ENCODE measurements at regions of chr5 and their contacts with region 1.

Region 1: GRCh38 chr5:157858527-157859226 is at the start of gene CLINT1:
- DNase-seq: peak; percentile 98
- H3K4me3 ChIP-seq: peak within 1 kb of the TSS; percentile 72 to 98 (median 92)
- H3K27ac ChIP-seq: peak within 1 kb of the TSS; percentile 81 to 92 (median 90)
- H3K4me1 ChIP-seq: peaks cover 35 to 52% (median 45%) of the 10 kb centered on the region in 4 donors
- H3K27me3 ChIP-seq: no peaks in the 10 kb centered on the region
- CTCF ChIP-seq: peak in 1 of 3 experiments; percentile 12
- EP300 ChIP-seq: no peak
- POLR2A ChIP-seq: peak; percentile 60
- total RNA-seq, gene CLINT1: 84.3 to 118 (median 107) TPM

Region 2: GRCh38 chr5:157917899-157918809 is 59.5 kb after region 1 on chr5:
- intact Hi-C with region 1: loop called (anchors 1 kb)
- DNase-seq: no peak
- H3K4me3 ChIP-seq: no peak overlapping the region
- H3K27ac ChIP-seq: no peak overlapping the region
- H3K4me1 ChIP-seq: peaks cover 28 to 51% (median 34%) of the 10 kb centered on the region in 4 donors
- H3K27me3 ChIP-seq: no peaks in the 10 kb centered on the region
- CTCF ChIP-seq: peak; percentile 38 to 49 (median 42)
- EP300 ChIP-seq: no peak
- POLR2A ChIP-seq: no peak

Region 3: DNA sequence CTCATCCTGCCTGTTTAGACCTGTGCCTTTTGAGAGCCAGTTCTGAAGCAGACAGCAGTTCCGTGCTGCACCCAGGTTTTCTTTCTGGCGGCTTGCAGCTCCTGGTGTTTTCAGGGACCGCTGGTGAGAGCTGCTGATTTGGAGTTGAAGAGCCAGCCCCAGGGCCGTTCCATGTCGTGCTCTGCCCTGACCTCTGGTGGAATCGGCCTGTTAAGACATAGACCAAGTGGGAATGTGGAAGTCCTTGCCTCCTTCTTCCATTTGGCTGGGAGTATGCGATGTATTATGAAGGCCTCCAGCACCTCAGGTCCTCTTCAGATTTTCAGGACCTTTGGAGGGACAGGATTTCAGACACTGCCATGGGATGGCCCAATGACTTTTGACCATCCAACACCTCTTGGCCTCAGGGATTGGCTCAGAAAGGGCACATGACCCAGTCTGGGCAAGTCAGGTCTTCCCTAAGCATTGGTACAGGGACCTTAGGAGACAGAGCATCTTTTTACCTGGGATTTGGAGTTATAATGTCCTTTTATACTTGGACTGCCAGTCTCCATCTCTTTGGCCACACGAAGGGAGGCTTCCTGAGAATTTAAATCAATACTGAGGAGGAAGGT is 136.3 kb after region 1 on chr5:
- intact Hi-C with region 1: loop called (anchors 5 kb)
- DNase-seq: no peak
- H3K4me3 ChIP-seq: no peak overlapping the region
- H3K27ac ChIP-seq: no peak overlapping the region
- H3K4me1 ChIP-seq: peaks cover 3 to 21% (median 9%) of the 10 kb centered on the region in 4 donors
- H3K27me3 ChIP-seq: no peaks in the 10 kb centered on the region
- CTCF ChIP-seq: peak; percentile 81 to 84 (median 82)
- EP300 ChIP-seq: no peak
- POLR2A ChIP-seq: no peak

Region 4: DNA sequence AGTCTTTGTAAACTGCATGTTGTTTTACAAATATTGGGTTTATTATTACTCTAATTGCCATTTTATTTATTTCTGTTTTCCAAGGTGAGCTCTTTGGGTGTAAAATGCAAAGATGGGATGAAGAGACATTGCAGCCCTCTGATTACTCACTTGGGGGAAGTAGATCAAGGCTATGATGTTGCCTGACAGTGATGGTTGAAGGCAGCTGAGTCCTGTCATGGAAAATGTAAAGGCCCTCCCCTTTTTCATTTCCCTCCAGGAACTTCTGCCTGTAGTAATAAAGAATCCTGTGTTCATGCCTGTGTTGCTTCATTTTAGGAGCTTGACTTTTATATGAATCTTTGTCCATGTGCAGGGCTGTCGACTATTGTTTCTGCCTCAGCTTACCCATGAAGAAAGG is 605.7 kb after region 1 on chr5:
- intact Hi-C with region 1: no loop called
- DNase-seq: no peak
- H3K4me3 ChIP-seq: no peak overlapping the region
- H3K27ac ChIP-seq: peak overlapping the region; percentile 36 to 66 (median 54)
- H3K4me1 ChIP-seq: peaks cover 6 to 52% (median 42%) of the 10 kb centered on the region in 4 donors
- H3K27me3 ChIP-seq: no peaks in the 10 kb centered on the region
- CTCF ChIP-seq: no peak
- EP300 ChIP-seq: no peak
- POLR2A ChIP-seq: no peak